ENCODE measurements at regions of chr16 and their contacts with region 1.

Region 1: GRCh38 chr16:58541711-58542110 is 26.4 kb downstream of the SETD6 start:
- DNase-seq: no peak
- ATAC-seq: no peak
- H3K4me3 ChIP-seq: no peak overlapping the region
- H3K27ac ChIP-seq: no peak overlapping the region
- H3K4me1 ChIP-seq: no peaks in the 10 kb centered on the region
- H3K27me3 ChIP-seq: no peaks in the 10 kb centered on the region
- CTCF ChIP-seq: no peak
- EP300 ChIP-seq: no peak
- POLR2A ChIP-seq: no peak
- RAD21 ChIP-seq: no peak

Region 2: GRCh38 chr16:58518083-58518979 is 23.4 kb before region 1 on chr16:
- CTCF ChIA-PET with region 1: no interaction called
- POLR2A ChIA-PET with region 1: interaction called, 13 read pairs
- in situ Hi-C with region 1: no loop called
- intact Hi-C with region 1: no loop called
- DNase-seq: no peak
- ATAC-seq: no peak
- H3K4me3 ChIP-seq: no peak overlapping the region
- H3K27ac ChIP-seq: no peak overlapping the region
- H3K4me1 ChIP-seq: peaks cover 4 to 24% of the 10 kb centered on the region in 2 experiments; a peak in 4 of 5 replicates
- H3K27me3 ChIP-seq: no peaks in the 10 kb centered on the region
- CTCF ChIP-seq: no peak
- EP300 ChIP-seq: no peak
- POLR2A ChIP-seq: peak; percentile 47; the same call in 1 of the 2 replicates
- RAD21 ChIP-seq: no peak

Region 3: DNA sequence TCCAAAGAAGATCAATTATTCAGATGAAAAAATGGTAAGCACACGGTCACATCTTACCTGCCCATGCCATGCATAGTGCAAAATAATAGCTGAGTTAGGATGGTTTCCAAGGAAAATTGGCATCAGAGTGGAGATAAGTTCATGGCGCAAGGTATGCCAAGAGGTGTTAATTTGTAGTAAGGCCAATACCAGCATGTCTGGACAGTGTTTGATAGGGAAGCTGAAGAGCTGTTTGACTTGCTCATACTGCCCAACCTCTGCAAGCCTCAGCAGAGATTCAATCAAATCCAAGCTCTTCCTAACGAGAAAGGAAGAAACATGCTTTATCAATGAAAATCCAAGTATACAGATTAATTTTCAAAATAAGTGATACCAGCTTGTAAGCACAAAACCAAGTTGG is 36.9 kb after region 1 on chr16:
- CTCF ChIA-PET with region 1: no interaction called
- POLR2A ChIA-PET with region 1: interaction called, 4 read pairs
- in situ Hi-C with region 1: no loop called
- intact Hi-C with region 1: loop called (anchors 5 kb)
- DNase-seq: no peak
- ATAC-seq: no peak
- H3K4me3 ChIP-seq: no peak overlapping the region
- H3K27ac ChIP-seq: no peak overlapping the region
- H3K4me1 ChIP-seq: no peaks in the 10 kb centered on the region
- H3K27me3 ChIP-seq: no peaks in the 10 kb centered on the region
- CTCF ChIP-seq: no peak
- EP300 ChIP-seq: no peak
- POLR2A ChIP-seq: no peak
- RAD21 ChIP-seq: no peak

Measured in K562 (cell line).